HEK293 (cell line): ENCODE measurements at regions of chr6 and their contacts with region 1.

Region 1: DNA sequence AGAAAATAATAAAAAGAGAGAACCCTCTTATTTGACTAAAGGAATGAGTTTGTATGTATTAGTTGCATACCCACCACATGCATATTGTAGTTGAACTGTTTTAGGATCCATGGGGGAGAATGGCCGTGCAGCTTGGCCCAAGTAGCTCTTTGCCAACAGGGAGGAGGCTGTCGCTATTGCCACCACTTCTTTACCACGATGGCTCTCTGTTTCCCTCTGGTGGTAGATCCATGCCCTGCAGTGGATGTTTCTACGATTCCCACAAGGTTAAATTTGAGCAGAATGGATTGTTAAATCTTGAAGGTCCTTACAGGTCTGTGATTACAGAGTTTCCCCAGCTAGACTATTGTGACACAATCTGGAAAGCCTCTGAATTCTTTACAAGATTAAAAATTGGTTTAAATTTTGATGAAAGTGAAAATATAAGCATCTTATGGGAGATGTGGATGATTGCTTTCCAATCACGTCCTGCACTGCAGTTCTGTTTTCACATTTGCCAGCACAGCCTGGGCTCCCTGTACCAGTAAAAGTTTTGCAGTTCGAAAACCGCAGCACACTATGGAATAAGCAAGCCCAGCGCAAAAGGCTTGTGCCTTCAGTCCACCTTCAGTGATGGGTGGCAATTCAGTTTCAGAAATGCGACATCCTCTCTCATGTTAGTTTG is 34.4 kb upstream of the FNDC1 start:
- H3K4me3 ChIP-seq: no peak overlapping the region
- H3K27ac ChIP-seq: no peak overlapping the region
- H3K4me1 ChIP-seq: no peaks in the 10 kb centered on the region
- CTCF ChIP-seq: peak; percentile 75

Region 2: DNA sequence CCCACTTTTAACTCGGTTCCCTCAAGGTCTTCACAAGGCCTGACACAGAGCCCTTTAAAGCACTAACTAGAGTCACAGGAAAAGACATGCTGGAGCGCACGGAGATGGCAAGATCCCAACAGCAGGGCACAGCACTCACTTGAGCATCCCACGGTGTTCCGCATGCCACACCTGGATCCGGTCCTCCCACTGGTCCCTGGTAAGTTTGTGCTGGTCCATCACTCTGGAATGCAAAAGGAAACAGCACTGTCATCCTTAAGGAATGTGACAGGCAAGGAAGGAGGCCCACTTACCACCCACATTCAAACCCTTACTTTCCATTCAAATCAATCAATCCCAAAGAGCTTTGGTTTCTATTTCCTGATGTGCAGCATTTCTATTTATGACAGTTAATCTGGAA is 350.3 kb before region 1 on chr6:
- CTCF ChIA-PET with region 1: no interaction called
- POLR2A ChIA-PET with region 1: no interaction called
- H3K4me3 ChIP-seq: no peak overlapping the region
- H3K27ac ChIP-seq: no peak overlapping the region
- H3K4me1 ChIP-seq: no peaks in the 10 kb centered on the region
- CTCF ChIP-seq: no peak

Region 3: GRCh38 chr6:158972241-158973233 is 162.3 kb before region 1 on chr6:
- CTCF ChIA-PET with region 1: interaction called, 25 read pairs
- POLR2A ChIA-PET with region 1: no interaction called
- H3K4me3 ChIP-seq: no peak overlapping the region
- H3K27ac ChIP-seq: no peak overlapping the region
- H3K4me1 ChIP-seq: no peaks in the 10 kb centered on the region
- CTCF ChIP-seq: no peak

Region 4: DNA sequence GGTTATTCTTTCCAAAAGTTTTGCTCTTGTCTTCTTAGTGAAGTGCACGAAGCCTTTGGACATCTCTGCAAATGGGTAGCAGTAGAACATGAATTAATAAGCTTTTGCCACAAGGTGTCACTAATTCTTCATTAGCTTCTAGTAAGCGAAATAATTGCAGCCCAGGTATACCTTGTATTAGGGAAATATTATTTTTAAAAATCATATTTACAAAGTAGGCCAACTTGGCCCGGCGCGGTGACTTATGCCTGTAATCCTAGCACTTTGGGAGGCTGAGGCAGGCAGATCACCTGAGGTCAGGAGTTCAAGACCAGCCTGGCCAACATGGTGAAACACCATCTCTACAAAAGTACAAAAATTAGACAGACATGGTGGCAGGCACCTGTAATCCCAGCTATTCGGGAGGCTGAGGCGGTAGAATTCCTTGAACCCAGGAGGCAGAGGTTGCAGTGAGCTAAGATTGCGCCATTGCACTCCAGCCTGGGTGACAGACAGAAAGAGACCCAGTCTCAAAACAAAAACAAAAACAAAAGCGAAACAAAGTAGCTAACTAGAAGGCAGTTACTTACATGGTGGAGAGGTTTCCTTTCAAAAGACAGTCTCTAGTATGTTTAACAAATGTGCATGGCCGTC is 126.1 kb before region 1 on chr6:
- CTCF ChIA-PET with region 1: interaction called, 63 read pairs
- POLR2A ChIA-PET with region 1: interaction called, 3 read pairs
- H3K4me3 ChIP-seq: no peak overlapping the region
- H3K27ac ChIP-seq: no peak overlapping the region
- H3K4me1 ChIP-seq: no peaks in the 10 kb centered on the region
- CTCF ChIP-seq: no peak

Region 5: DNA sequence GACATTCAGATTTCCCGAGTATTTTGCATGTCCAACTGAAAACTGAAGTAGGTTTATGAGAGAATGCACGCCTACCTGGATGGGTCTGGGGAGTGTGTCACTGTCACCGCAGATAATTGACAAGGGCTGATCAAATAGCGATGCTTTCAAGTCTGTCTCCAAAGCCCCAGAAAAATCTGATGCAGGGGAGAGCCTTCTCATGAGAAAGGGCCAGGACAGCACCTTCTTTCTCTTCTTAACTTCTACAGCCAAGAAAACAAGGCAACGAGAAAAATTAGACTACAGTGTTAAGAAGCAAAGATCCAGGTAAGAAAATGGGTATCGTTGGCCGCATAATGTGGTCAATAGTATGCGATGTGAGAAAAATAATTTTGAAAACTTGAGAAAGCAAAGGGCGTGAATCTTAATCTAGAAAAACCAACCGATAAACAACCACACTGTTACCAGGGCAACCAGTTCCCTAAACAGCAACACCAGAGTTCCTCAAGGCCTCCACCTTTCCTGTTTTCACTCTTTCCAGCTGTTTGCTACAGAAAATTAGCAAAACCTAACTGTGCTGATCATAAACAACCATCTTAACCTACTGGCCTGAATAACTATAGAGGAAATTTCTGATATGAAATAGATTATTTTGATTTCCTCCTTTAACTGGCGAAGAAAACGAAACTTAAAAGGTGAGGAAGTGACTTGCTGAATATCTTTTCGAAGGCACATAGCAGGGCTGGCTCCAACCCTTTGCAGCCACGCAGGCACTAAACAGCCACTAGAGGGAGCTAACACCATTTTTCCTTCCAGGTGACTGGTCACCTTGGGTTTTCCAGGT is 92.6 kb before region 1 on chr6:
- CTCF ChIA-PET with region 1: interaction called, 68 read pairs
- POLR2A ChIA-PET with region 1: no interaction called
- H3K4me3 ChIP-seq: no peak overlapping the region
- H3K27ac ChIP-seq: no peak overlapping the region
- H3K4me1 ChIP-seq: no peaks in the 10 kb centered on the region
- CTCF ChIP-seq: peak; percentile 62

Region 6: GRCh38 chr6:159110013-159110412 is 24.8 kb before region 1 on chr6:
- CTCF ChIA-PET with region 1: interaction called, 49 read pairs
- POLR2A ChIA-PET with region 1: interaction called, 4 read pairs
- H3K4me3 ChIP-seq: no peak overlapping the region
- H3K27ac ChIP-seq: no peak overlapping the region
- H3K4me1 ChIP-seq: no peaks in the 10 kb centered on the region
- CTCF ChIP-seq: 0 out of 2 replicates have a peak, but pooled peaks have one; percentile 9

Region 7: GRCh38 chr6:159151266-159151855 is 16.5 kb after region 1 on chr6:
- CTCF ChIA-PET with region 1: interaction called, 96 read pairs
- POLR2A ChIA-PET with region 1: no interaction called
- H3K4me3 ChIP-seq: no peak overlapping the region
- H3K27ac ChIP-seq: no peak overlapping the region
- H3K4me1 ChIP-seq: no peaks in the 10 kb centered on the region
- CTCF ChIP-seq: no peak

Region 8: DNA sequence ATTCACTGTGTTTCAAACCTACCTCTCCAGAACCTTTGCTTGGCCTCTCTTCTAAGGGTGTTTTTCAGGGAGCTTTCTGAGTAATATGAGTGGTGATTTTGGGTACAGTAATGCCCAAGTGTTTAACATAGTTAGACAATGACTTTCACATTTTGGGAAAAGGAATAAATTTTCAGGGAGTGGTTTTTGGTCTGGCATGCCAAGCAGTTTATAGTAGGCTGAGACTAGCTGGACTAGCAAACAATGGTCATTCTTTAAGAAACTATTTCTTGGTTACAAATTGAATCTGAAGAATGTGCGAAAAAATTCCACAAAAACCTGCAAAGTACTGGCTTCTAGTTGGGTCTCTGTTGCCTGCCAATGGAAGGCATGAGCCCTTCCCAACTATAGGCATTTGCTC is 49.7 kb after region 1 on chr6:
- CTCF ChIA-PET with region 1: no interaction called
- POLR2A ChIA-PET with region 1: no interaction called
- H3K4me3 ChIP-seq: no peak overlapping the region
- H3K27ac ChIP-seq: no peak overlapping the region
- H3K4me1 ChIP-seq: no peaks in the 10 kb centered on the region
- CTCF ChIP-seq: no peak

Region 9: DNA sequence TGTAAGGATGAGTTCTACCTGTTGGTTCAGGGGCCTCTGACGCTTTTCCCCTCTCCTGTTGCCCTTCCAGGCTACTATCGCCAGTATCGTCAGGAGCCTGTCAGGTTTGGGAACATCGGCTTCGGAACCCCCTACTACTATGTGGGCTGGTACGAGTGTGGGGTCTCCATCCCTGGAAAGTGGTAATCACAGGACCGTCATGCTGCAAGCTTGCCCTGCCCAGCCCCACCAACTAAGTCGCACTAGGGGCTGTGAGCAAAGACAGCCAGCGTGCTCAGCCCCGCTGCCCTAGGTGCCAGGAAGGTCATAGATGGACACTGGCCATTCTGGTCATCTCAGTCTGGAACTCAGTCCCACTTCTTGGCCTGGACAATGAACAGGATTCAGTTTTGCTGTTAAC is 136.4 kb after region 1 on chr6:
- CTCF ChIA-PET with region 1: no interaction called
- POLR2A ChIA-PET with region 1: no interaction called
- H3K4me3 ChIP-seq: no peak overlapping the region
- H3K27ac ChIP-seq: no peak overlapping the region
- H3K4me1 ChIP-seq: no peaks in the 10 kb centered on the region
- CTCF ChIP-seq: no peak